ENCODE measurements at regions of chr9 and their contacts with region 1.

Region 1: DNA sequence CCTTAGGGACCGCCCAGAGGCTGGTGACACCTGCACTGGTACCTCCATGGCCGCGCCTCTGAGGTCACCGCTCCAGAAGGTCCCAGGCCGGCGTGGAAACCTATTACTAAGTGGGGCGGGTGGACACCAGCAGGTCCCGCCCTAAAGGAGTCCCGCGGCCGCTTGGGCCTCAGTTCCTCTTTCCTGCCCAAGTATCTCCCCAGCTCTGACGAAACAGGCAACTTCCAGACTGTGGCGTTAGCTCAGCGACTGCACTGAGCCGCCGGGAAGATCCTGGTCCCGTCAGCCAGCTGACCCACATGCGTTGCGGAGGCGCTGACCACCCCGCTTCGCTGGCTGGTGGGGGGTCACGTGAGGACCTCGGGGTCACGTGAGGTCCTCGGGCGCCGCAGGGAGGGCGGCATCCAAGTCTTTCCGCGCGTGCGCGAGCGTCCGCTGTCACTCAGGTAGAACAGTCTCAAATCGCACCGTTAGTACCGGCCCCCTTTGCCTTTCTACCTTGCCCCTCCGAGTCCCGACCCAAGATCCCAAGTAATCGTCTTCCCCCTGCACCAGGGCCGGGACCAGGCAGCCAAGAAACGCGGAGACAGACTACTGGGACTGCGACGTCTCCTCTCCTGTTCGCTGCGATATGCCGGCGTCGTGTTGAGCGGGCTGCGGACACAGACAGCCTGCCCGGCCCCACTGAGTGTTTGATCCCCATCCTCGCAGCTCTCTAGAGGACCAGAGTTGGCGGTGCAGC is 53.7 kb upstream of the KDM4C start:
- DNase-seq: peak; percentile 75 to 78 (median 78)
- H3K4me3 ChIP-seq: peak overlapping the region; percentile 86 to 91
- H3K4me3 Mint-ChIP-seq: peak overlapping the region; percentile 91 to 98 (median 95)
- H3K27ac ChIP-seq: peak overlapping the region; percentile 92
- H3K27ac Mint-ChIP-seq: peak overlapping the region; percentile 93 to 99 (median 96)
- H3K4me1 ChIP-seq: peaks cover 12% of the 10 kb centered on the region
- H3K4me1 Mint-ChIP-seq: peaks cover 2 to 15% (median 11%) of the 10 kb centered on the region in 4 donors
- H3K27me3 ChIP-seq: no peaks in the 10 kb centered on the region
- H3K27me3 Mint-ChIP-seq: peaks cover 0 to 1% of the 10 kb centered on the region in 2 donors

Region 2: DNA sequence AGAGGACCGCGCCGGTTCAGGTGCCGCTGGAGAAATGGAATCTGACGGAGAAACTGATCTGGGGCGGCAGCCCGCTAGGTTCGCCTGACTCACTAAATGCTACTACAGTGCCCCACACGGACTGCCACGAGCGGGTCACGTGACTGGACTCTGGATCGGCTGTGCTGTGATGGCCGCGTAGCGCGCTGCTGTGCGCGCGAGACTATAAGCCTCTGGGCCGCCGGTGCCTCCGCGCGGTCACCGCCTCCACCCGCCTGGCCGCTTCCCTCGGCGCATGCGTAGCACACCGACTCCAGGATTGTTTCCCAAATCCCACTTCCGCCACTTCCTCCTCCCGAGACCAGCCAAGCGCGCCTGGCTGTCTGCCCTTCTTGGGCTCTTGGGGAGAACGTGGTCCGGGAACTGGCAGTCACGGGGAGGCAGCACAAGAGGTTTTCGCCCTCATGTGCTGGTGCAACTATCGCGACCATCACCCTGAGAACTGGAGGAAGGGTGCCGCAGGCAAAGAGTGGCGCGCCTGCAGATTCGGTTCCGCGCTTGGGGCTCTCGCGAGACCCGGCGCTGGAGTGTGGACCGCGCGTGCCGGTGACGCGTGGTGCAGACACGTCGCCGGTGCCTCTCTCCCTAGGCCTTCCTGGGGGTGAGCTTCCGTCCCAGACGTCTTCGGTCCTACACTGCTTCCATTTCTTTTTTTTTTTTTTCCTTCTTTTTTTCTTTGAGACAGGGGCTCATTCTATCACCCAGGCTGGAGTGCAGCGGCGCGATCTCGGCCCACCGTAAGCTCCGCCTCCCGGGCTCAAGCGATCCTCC is 22.7 kb before region 1 on chr9:
- CTCF ChIA-PET with region 1: interaction called, 10 read pairs
- POLR2A ChIA-PET with region 1: interaction called, 55 read pairs
- intact Hi-C with region 1: loop called (anchors 1 kb)
- DNase-seq: peak; percentile 92 to 96 (median 94)
- H3K4me3 ChIP-seq: peak overlapping the region; percentile 91 to 99
- H3K4me3 Mint-ChIP-seq: peak overlapping the region; percentile 93 to 97 (median 95)
- H3K27ac ChIP-seq: peak overlapping the region; percentile 82
- H3K27ac Mint-ChIP-seq: peak overlapping the region; percentile 94 to 100 (median 99)
- H3K4me1 ChIP-seq: peaks cover 23% of the 10 kb centered on the region
- H3K4me1 Mint-ChIP-seq: peaks cover 14 to 34% (median 22%) of the 10 kb centered on the region in 4 donors
- H3K27me3 ChIP-seq: no peaks in the 10 kb centered on the region
- H3K27me3 Mint-ChIP-seq: no peaks in the 10 kb centered on the region